Left lung (tissue), 14 donors: ENCODE measurements at regions of chr12 and their contacts with region 1.

Region 1: GRCh38 chr12:69059483-69060457 is 126.8 kb upstream of the CPM start:
- DNase-seq: no peak
- ATAC-seq: peak; percentile 19
- H3K4me3 ChIP-seq: no peak overlapping the region
- H3K27ac ChIP-seq: peak overlapping the region in 1 of 2 donors; percentile 28
- H3K4me1 ChIP-seq: peaks cover 18 to 49% of the 10 kb centered on the region in 2 donors
- H3K27me3 ChIP-seq: no peaks in the 10 kb centered on the region
- CTCF ChIP-seq: no peak

Region 2: GRCh38 chr12:68866950-68867349 is 192.8 kb before region 1 on chr12:
- intact Hi-C with region 1: loop called in 1 of 2 experiments (anchors 10 kb)
- DNase-seq: no peak
- ATAC-seq: no peak
- H3K4me3 ChIP-seq: no peak overlapping the region
- H3K27ac ChIP-seq: no peak overlapping the region
- H3K4me1 ChIP-seq: peaks cover 0 to 5% of the 10 kb centered on the region in 2 donors
- H3K27me3 ChIP-seq: no peaks in the 10 kb centered on the region
- CTCF ChIP-seq: no peak